Activated CD8-positive, alpha-beta T cell treated with anti-CD3 and anti-CD28 coated beads, Interleukin-2, amount 10 ng/mL, durations not matched to agents 7 days and 5 days (primary cell): ENCODE measurements at regions of chr6 and their contacts with region 1.

Region 1: GRCh38 chr6:31827286-31828079 is at the start of gene HSPA1B:
- DNase-seq: peak; percentile 99
- ATAC-seq: peak; percentile 78
- H3K4me3 Mint-ChIP-seq: peak within 1 kb of the TSS; percentile 86
- H3K27ac Mint-ChIP-seq: peak within 1 kb of the TSS; percentile 93
- H3K4me1 Mint-ChIP-seq: peaks cover 53% of the 10 kb centered on the region
- H3K27me3 Mint-ChIP-seq: no peaks in the 10 kb centered on the region
- total RNA-seq, gene HSPA1B: 84.6 to 87.1 TPM

Region 2: DNA sequence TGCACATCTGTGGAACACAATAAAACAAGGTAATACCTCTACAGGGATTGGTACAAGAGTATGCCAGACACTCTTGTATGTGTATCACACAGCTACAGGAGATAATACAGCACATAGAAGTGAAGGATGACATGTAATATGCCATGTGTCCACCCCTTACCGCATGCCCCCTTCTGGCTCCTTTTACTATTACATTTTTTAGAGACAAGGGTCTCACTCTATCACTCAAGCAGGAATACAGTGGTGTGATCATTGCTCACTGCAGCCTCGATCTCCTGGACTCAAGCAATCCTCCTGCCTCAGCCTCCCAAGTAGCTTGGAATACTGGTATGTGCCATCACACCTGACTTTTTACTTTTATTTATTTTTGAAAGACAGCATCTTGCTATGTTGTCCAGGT is 230.5 kb before region 1 on chr6:
- CTCF ChIA-PET with region 1: interaction called, 18 read pairs
- POLR2A ChIA-PET with region 1: interaction called, 3 read pairs
- DNase-seq: peak; percentile 68
- ATAC-seq: peak; percentile 68
- H3K4me3 Mint-ChIP-seq: no peak overlapping the region
- H3K27ac Mint-ChIP-seq: peak overlapping the region; percentile 43
- H3K4me1 Mint-ChIP-seq: peaks cover 59% of the 10 kb centered on the region
- H3K27me3 Mint-ChIP-seq: no peaks in the 10 kb centered on the region

Region 3: DNA sequence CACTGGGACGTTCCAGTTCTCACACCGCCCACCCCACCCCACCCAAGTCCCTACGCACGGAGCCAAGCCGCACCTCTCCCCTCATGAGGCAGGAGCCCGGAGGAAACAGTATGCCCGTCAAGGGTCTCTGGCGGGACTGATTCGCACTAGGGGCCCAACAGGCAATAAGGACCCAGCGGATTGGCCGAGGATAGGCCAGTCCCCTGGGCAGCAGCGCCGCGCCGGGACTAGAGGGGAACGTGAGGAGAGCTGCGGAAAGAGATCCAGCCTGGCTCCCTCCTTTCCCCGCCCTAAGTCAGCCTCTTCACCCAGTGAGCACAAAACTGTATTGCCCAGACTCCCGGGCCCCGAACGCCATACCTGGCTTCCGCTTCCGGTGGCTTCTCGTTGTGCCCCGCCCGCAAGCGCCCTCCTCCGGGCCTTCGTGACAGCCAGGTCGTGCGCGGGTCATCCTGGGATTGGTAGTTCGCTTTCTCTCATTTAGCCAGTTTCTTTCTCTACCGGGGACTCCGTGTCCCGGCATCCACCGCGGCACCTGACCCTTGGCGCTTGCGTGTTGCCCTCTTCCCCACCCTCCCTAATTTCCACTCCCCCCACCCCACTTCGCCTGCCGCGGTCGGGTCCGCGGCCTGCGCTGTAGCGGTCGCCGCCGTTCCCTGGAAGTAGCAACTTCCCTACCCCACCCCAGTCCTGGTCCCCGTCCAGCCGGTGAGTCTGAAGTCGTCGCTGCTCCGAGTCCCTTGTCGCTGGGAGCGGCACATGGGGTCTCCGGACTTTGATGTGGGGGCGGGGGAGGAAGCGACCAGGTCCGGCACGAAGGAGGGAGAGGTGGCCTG is 161.8 kb before region 1 on chr6 and contains the start of gene CSNK2B:
- CTCF ChIA-PET with region 1: interaction called, 3 read pairs
- POLR2A ChIA-PET with region 1: interaction called, 17 read pairs
- DNase-seq: peak; percentile 99
- ATAC-seq: peak; percentile 85
- H3K4me3 Mint-ChIP-seq: peak within 1 kb of the TSS; percentile 96
- H3K27ac Mint-ChIP-seq: peak within 1 kb of the TSS; percentile 95
- H3K4me1 Mint-ChIP-seq: peaks cover 73% of the 10 kb centered on the region
- H3K27me3 Mint-ChIP-seq: no peaks in the 10 kb centered on the region
- total RNA-seq, gene CSNK2B: 233 to 250 TPM

Region 4: DNA sequence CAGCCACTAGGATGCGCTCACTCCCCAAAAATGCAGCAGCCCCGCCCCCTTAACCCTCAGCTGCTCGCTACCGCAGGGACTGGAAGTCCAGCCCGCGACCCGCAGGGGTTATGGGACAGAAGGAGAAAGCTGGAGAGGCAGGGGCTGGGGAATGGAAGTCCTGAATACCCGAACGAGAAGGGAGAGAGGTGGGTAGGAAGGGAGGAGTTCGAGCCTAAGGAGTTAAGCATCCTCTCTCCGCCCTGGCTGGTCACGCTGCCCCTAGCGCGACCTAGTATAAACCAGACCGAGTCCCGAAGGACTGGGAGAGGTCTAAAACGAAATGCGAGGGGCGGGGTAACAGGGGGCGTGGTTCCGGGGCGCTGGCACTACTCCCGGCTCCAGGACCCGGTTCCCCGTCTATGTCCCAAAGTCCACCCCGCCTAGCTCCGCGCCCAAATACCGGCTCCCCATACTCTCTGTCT is 97.9 kb before region 1 on chr6:
- CTCF ChIA-PET with region 1: interaction called, 17 read pairs
- POLR2A ChIA-PET with region 1: interaction called, 33 read pairs
- DNase-seq: peak; percentile 88
- ATAC-seq: peak; percentile 67
- H3K4me3 Mint-ChIP-seq: peak overlapping the region; percentile 95
- H3K27ac Mint-ChIP-seq: peak overlapping the region; percentile 90
- H3K4me1 Mint-ChIP-seq: peaks cover 81% of the 10 kb centered on the region
- H3K27me3 Mint-ChIP-seq: no peaks in the 10 kb centered on the region

Region 5: GRCh38 chr6:31806465-31807272 is 20.8 kb before region 1 on chr6 and contains the start of gene LSM2:
- CTCF ChIA-PET with region 1: interaction called, 13 read pairs
- POLR2A ChIA-PET with region 1: interaction called, 11 read pairs
- DNase-seq: peak; percentile 98
- ATAC-seq: peak; percentile 98
- H3K4me3 Mint-ChIP-seq: peak within 1 kb of the TSS; percentile 97
- H3K27ac Mint-ChIP-seq: peak within 1 kb of the TSS; percentile 91
- H3K4me1 Mint-ChIP-seq: peaks cover 33% of the 10 kb centered on the region
- H3K27me3 Mint-ChIP-seq: no peaks in the 10 kb centered on the region
- total RNA-seq, gene LSM2: 123 to 128 TPM